ENCODE measurements at regions of chr2 and their contacts with region 1.

Region 1: DNA sequence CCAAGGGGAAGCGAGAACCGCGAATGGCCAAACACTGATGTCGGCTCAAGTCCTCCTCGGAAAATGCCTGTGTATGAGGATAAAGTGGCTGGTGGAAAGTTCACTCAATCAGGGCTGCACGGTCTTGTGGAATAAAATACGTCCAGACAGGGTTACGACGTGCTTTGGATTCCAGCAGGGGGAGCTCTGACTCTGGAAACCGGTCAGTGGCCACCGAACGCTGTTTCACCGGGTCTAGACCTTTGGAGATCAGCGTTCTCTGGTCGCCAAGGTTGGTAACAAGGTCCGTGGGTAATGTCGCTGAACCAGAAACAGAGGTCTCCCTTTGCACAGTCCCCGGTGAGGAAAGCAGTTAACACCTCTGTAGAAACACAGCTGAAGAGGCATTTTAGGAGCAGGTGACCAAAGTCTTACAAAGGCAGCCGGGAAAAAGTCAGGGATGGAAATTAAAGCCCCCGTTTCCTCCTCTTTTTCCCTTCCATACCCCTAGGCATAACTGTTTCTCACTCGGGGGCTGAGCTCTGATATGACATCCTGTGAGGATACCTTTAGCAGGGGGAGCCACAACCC is 47.8 kb downstream of the CDCA7 start:
- DNase-seq: peak in 3 of 4 donors; percentile 74 to 89 (median 79)
- ATAC-seq: peak; percentile 99
- H3K4me3 ChIP-seq: no peak overlapping the region
- H3K27ac ChIP-seq: no peak overlapping the region
- H3K4me1 ChIP-seq: no peaks in the 10 kb centered on the region
- H3K27me3 ChIP-seq: peaks cover 45 to 86% of the 10 kb centered on the region in 2 donors
- CTCF ChIP-seq: peak; percentile 63 to 70

Region 2: GRCh38 chr2:173448938-173449471 is 46.5 kb after region 1 on chr2:
- intact Hi-C with region 1: loop called in 1 of 2 experiments (anchors 5 kb)
- DNase-seq: peak; percentile 32 to 84 (median 76)
- ATAC-seq: peak; percentile 96
- H3K4me3 ChIP-seq: peak overlapping the region in 1 of 2 donors; percentile 2
- H3K27ac ChIP-seq: no peak overlapping the region
- H3K4me1 ChIP-seq: no peaks in the 10 kb centered on the region
- H3K27me3 ChIP-seq: no peaks in the 10 kb centered on the region
- CTCF ChIP-seq: peak; percentile 53 to 71

Region 3: GRCh38 chr2:174341286-174341994 is 939.0 kb after region 1 on chr2:
- intact Hi-C with region 1: loop called in 1 of 2 experiments (anchors 10 kb)
- DNase-seq: peak; percentile 79 to 99 (median 89)
- ATAC-seq: peak; percentile 94
- H3K4me3 ChIP-seq: no peak overlapping the region
- H3K27ac ChIP-seq: no peak overlapping the region
- H3K4me1 ChIP-seq: peaks cover 19 to 48% of the 10 kb centered on the region in 2 donors
- H3K27me3 ChIP-seq: peaks cover 93 to 99% of the 10 kb centered on the region in 2 donors
- CTCF ChIP-seq: peak; percentile 96

Measured in left lung (tissue), 14 donors.